Psoas muscle (tissue), 8 donors: ENCODE measurements at regions of chr14 and their contacts with region 1.

Region 1: GRCh38 chr14:50974118-50974517 is 29.8 kb upstream of the PYGL start:
- DNase-seq: peak; percentile 28 to 79
- ATAC-seq: peak; percentile 82 to 93 (median 86)
- H3K4me3 ChIP-seq: no peak overlapping the region
- H3K27ac ChIP-seq: peak overlapping the region; percentile 74
- H3K4me1 ChIP-seq: peaks cover 22% of the 10 kb centered on the region
- H3K27me3 ChIP-seq: no peaks in the 10 kb centered on the region
- CTCF ChIP-seq: no peak

Region 2: DNA sequence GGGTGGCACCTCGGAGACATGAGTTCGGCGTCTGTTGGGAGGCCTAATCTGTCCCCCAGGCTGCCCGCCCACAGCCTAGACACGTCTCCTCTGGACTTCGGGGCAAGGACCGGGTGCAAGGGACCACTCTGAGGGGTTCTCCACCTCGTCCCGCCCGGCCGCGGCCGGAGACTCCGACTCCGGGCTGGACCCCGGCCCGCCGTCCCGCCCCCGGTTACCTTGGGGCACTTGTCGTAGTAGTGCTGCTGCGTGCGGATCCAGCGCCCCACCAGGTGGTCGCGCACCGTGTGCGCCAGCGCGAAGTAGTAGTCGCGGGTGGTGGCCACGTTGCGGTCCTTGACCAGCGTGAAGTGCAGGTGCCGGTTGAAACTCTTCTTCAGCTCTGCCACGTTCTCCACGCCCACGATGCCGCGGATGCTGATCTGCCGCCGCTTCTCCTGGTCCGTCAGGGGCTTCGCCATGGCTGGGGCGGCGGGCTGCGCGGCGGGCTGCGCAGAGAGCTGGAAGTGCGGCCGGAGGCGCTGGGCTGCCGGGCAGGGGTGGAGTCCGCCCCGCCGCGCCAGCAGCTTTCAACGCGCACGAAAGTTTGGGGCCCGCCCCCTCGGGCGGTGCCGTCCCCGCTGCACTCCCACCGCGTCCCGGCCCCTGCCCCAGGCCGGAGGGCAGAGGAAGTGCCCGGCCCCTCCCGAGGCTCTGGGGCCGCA is 30.0 kb before region 1 on chr14 and contains the start of gene PYGL:
- intact Hi-C with region 1: no loop called
- DNase-seq: peak; percentile 82 to 84
- ATAC-seq: peak; percentile 84 to 94 (median 89)
- H3K4me3 ChIP-seq: peak within 1 kb of the TSS; percentile 92
- H3K27ac ChIP-seq: peak within 1 kb of the TSS; percentile 71
- H3K4me1 ChIP-seq: no peaks in the 10 kb centered on the region
- H3K27me3 ChIP-seq: peaks cover 0 to 2% (median 0%) of the 10 kb centered on the region in 3 donors
- CTCF ChIP-seq: no peak
- total RNA-seq, gene PYGL: 7.6 to 24.7 (median 18.8) TPM

Region 3: GRCh38 chr14:51006781-51007211 is 32.7 kb after region 1 on chr14:
- intact Hi-C with region 1: loop called in 1 of 2 experiments (anchors 5 kb)
- DNase-seq: peak; percentile 72 to 89
- ATAC-seq: peak; percentile 94 to 99 (median 97)
- H3K4me3 ChIP-seq: peak overlapping the region; percentile 9
- H3K27ac ChIP-seq: peak overlapping the region; percentile 85
- H3K4me1 ChIP-seq: peaks cover 61% of the 10 kb centered on the region
- H3K27me3 ChIP-seq: no peaks in the 10 kb centered on the region
- CTCF ChIP-seq: no peak